GM18951 (cell line): ENCODE measurements at regions of chr1 and their contacts with region 1.

Region 1: GRCh38 chr1:203861379-203862184 is at the start of gene SNRPE:
- POLR2A ChIP-seq: peak; percentile 79

Region 2: DNA sequence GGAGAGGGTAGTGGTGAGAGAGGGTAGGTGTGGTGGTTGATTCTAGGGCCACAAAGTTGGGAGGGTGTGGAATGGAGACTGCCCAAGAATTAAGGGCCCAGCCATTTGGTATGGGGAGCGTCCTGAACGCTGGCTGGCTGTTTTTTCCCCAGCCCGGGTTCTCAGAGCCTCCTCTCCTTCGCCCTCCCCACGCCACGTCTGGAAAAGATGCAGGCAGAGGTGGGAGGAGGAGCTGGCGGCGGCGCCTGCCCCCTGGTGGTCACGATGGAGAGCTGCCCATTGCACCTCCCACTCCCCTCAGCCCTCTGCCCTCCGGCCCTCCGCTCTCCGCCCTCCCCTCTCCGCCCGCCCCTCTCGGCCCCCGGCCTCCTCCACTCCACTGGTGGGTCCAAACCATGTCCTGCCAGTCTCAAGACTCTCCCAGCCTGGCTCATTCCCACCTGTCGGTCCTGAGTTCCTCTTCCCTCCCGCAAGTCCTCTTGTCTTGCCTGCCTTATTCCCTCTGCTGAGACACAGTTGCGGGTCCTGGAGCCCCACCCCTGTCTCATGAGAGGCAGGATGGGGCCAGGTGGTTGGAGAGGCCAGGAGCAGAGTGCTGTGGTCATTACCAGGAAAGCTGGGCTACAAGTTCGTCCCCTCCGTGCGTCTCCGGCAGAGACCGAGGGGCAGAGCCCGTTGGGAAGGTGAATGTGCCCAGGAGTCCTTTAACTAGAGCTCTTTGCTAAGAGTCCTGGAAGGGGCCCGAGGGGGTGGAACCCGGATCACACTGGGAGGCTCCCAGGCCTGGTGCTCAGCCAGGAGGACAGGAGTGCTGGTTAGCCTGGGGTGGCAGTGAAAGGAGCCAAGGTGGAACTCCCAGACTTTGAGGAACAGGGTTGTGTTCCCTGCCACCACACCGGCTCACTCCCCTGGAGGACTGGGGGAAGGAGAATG is 267.6 kb after region 1 on chr1:
- in situ Hi-C with region 1: loop called (anchors 5 kb)
- POLR2A ChIP-seq: no peak

Region 3: DNA sequence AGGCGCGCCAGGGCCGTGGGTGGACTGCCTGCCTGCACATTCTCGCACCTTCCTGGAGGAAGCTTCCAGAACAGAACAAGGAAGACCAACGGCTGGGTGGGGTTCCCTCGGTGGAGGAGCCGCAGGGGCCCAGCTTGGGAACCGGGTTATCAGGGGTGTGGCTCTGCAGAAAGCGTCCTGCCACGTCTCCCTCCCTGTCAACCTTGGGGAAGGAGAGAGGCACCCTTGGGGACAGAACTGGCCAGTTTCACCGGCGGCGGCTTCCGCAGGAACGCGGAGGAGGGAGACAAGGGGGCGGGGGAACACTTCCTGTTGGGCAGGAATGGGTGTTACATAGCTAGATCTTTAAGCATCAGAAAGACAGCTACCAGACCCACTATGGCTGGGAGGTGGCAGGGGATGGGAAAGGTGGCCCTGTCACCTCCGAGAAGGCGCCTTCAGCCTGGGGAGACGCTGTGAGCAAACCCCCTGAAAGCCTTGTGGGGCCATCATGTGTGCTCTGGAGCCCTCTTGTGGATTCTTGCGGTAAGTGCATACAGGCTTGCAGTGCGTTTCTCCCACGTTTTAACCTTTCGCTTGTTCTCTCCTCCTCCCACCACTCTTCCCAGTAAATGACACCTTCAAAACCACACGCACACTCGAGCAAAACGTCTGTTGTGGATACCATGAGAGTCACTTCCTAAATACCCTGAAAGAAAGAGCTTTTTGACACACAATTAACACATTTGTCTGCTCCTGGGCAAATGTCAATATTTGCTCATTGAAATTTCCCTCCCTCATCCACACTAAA is 501.9 kb after region 1 on chr1:
- in situ Hi-C with region 1: loop called (anchors 25 kb)
- POLR2A ChIP-seq: no peak